Panc1 (cell line): ENCODE measurements at regions of chr13 and their contacts with region 1.

Region 1: GRCh38 chr13:108155185-108156106 is 59.9 kb downstream of the LIG4 start:
- DNase-seq: peak; percentile 20
- ATAC-seq: no peak
- H3K4me3 ChIP-seq: no peak overlapping the region
- H3K27ac ChIP-seq: no peak overlapping the region
- H3K4me1 ChIP-seq: no peaks in the 10 kb centered on the region
- H3K27me3 ChIP-seq: no peaks in the 10 kb centered on the region
- CTCF ChIP-seq: peak; percentile 74

Region 2: GRCh38 chr13:107205303-107206104 is 949.9 kb before region 1 on chr13:
- CTCF ChIA-PET with region 1: no interaction called
- POLR2A ChIA-PET with region 1: no interaction called
- in situ Hi-C with region 1: no loop called
- intact Hi-C with region 1: loop called (anchors 1 kb)
- DNase-seq: peak; percentile 25
- ATAC-seq: peak; percentile 84
- H3K4me3 ChIP-seq: no peak overlapping the region
- H3K27ac ChIP-seq: no peak overlapping the region
- H3K4me1 ChIP-seq: no peaks in the 10 kb centered on the region
- H3K27me3 ChIP-seq: no peaks in the 10 kb centered on the region
- CTCF ChIP-seq: peak; percentile 85

Region 3: GRCh38 chr13:107284173-107284572 is 871.3 kb before region 1 on chr13:
- CTCF ChIA-PET with region 1: no interaction called
- POLR2A ChIA-PET with region 1: no interaction called
- in situ Hi-C with region 1: no loop called
- intact Hi-C with region 1: no loop called
- DNase-seq: no peak
- ATAC-seq: no peak
- H3K4me3 ChIP-seq: no peak overlapping the region
- H3K27ac ChIP-seq: no peak overlapping the region
- H3K4me1 ChIP-seq: no peaks in the 10 kb centered on the region
- H3K27me3 ChIP-seq: no peaks in the 10 kb centered on the region
- CTCF ChIP-seq: no peak

Region 4: DNA sequence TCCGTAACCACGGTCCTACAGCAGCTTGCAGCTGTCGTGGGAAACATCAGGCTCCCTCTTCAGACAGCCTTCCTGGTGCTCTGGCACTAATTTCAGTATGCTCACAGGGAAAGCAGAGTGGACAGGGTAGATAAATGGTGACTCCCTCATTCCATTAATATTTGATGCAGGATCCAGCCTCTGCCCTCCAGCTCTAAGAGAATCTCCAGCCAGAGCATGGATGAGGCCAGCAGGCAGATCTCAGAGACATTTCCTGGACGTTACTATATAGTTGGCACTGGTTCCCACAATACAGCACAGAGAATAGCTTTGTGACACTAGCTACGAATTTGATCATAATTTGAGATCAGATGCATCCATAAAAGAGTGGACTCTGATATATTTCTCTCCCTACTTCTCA is 281.5 kb before region 1 on chr13:
- CTCF ChIA-PET with region 1: no interaction called
- POLR2A ChIA-PET with region 1: no interaction called
- in situ Hi-C with region 1: no loop called
- intact Hi-C with region 1: loop called (anchors 10 kb)
- DNase-seq: no peak
- ATAC-seq: no peak
- H3K4me3 ChIP-seq: no peak overlapping the region
- H3K27ac ChIP-seq: no peak overlapping the region
- H3K4me1 ChIP-seq: no peaks in the 10 kb centered on the region
- H3K27me3 ChIP-seq: no peaks in the 10 kb centered on the region; the same call in 1 of the 2 replicates
- CTCF ChIP-seq: no peak

Region 5: GRCh38 chr13:107977071-107977574 is 178.3 kb before region 1 on chr13:
- CTCF ChIA-PET with region 1: no interaction called
- POLR2A ChIA-PET with region 1: no interaction called
- in situ Hi-C with region 1: no loop called
- intact Hi-C with region 1: no loop called
- DNase-seq: no peak
- ATAC-seq: no peak
- H3K4me3 ChIP-seq: no peak overlapping the region
- H3K27ac ChIP-seq: no peak overlapping the region
- H3K4me1 ChIP-seq: no peaks in the 10 kb centered on the region
- H3K27me3 ChIP-seq: no peaks in the 10 kb centered on the region
- CTCF ChIP-seq: no peak

Region 6: DNA sequence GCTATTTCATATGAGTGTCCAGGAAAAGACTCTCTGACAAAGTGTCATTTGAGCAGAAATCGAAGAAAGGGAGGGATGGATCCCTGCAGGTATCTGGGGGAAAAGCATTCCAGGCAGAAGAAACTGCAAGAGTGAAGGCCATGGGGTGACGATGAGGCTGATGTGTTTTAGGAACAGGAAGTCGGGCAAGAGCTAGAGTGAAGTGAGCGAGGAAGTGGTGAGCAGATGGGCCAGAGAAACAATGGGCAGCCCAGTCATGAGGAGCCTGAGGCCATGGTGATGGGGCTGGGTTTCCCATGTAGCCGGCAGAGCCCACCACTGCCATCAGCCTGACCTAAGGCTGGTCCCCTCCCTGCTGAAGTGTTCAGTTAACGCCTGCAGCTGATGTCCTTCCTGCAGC is 264.3 kb after region 1 on chr13:
- CTCF ChIA-PET with region 1: no interaction called
- POLR2A ChIA-PET with region 1: no interaction called
- in situ Hi-C with region 1: no loop called
- intact Hi-C with region 1: no loop called
- DNase-seq: no peak
- ATAC-seq: no peak
- H3K4me3 ChIP-seq: no peak overlapping the region
- H3K27ac ChIP-seq: no peak overlapping the region
- H3K4me1 ChIP-seq: no peaks in the 10 kb centered on the region
- H3K27me3 ChIP-seq: no peaks in the 10 kb centered on the region
- CTCF ChIP-seq: no peak